ENCODE measurements at regions of chr19 and their contacts with region 1.

Region 1: DNA sequence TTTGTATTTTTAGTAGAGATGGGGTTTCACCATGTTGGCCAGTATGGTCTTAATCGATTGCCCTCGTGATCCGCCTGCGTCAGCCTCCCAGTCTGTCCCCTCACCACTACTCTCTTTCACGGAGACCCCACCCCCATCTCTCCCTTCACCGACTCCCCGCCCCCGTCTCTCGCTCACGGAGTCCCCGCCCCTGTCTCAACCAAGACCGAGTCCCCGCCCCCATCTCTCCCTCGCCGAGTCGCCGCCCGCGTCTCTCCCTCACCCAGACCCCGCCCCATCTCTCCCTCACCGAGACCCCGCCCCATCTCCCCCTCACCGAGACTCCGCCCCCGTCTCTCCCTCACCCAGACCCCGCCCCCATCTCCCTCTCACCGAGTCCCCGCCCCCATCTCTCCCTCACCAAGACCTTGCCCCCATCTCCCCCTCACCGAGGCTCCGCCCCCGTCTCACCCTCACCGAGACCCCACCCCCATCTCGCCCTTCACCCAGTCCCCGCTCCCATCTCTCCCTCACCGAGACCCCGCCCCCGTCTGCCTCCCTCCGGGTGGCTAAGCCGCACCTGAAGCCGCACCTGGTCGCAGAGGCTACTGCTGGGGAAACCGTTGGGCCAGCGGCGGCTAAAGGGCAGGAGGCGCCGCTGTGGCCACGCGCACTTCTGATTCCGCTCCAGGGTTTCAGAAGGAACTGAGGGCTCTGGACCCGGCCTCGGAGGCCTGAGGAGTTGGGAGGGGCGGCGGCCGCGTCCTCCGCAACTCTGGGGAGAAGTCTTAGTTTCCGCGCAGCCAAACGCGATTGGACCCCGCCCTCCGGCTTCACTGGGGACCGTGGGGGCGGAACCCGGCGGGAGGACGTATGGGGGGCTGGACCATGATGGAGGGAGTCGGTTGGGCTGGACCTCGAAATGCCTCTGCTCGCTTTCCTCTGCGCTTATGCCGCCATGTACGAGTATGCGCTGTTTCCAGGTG is 17.1 kb upstream of the ZNF846 start:
- DNase-seq: peak; percentile 82
- ATAC-seq: peak; percentile 81 to 83
- H3K4me3 ChIP-seq: peak overlapping the region; percentile 66 to 77 (median 72)
- H3K27ac ChIP-seq: peak overlapping the region; percentile 86 to 94 (median 88)
- H3K4me1 ChIP-seq: no peaks in the 10 kb centered on the region
- H3K27me3 ChIP-seq: peaks cover 8 to 42% (median 36%) of the 10 kb centered on the region in 3 donors
- CTCF ChIP-seq: no peak
- POLR2A ChIP-seq: peak; percentile 41 to 73

Region 2: DNA sequence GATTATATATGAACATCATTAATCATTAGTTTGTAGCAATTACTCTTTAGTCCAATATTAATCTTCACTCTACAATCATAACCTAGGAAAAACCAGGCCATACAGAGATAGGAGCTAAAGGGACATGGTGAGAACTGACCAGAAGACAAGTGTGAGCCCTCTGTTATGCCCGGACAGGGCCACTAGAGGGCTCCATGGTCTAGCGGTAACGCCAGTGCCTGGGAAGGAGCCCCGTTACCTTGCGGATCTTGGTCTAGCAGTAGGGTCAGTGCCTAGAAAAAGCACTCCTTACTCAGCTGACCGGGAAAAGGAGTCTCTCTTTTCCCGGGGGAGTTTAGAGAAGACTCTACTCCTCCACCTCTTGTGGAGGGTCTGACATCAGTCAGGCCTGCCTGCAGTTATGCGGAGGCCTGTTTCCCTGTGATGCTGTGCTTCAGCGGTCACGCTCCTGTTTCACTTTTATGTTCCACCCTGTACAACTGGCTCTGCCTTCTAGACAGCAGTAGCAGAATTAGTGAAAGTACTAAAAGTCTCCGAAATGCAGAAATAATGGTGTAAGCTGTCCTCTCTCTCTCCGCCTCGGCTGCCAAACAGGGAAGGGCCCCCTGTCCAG is 580.0 kb before region 1 on chr19:
- in situ Hi-C with region 1: loop called in 3 of 4 experiments (anchors 10 to 25 kb)
- intact Hi-C with region 1: no loop called
- DNase-seq: peak; percentile 10 to 42
- ATAC-seq: no peak
- H3K4me3 ChIP-seq: peak overlapping the region; percentile 18 to 38 (median 35)
- H3K27ac ChIP-seq: no peak overlapping the region
- H3K4me1 ChIP-seq: no peaks in the 10 kb centered on the region
- H3K27me3 ChIP-seq: peaks cover 0 to 2% (median 0%) of the 10 kb centered on the region in 3 donors
- CTCF ChIP-seq: peak; percentile 41 to 83 (median 63)
- POLR2A ChIP-seq: no peak

Region 3: GRCh38 chr19:9808855-9809824 is 23.5 kb after region 1 on chr19:
- in situ Hi-C with region 1: no loop called
- intact Hi-C with region 1: no loop called
- DNase-seq: no peak
- ATAC-seq: no peak
- H3K4me3 ChIP-seq: no peak overlapping the region
- H3K27ac ChIP-seq: no peak overlapping the region
- H3K4me1 ChIP-seq: no peaks in the 10 kb centered on the region
- H3K27me3 ChIP-seq: no peaks in the 10 kb centered on the region
- CTCF ChIP-seq: no peak
- POLR2A ChIP-seq: no peak